ENCODE measurements at regions of chr12 and their contacts with region 1.

Region 1: GRCh38 chr12:108583991-108584390 is 13.9 kb downstream of the TMEM119 start:
- DNase-seq: no peak
- H3K4me3 ChIP-seq: no peak overlapping the region
- H3K27ac ChIP-seq: no peak overlapping the region
- H3K4me1 ChIP-seq: peaks cover 0 to 6% (median 2%) of the 10 kb centered on the region in 4 experiments; a peak in 5 of 7 replicates
- H3K27me3 ChIP-seq: no peaks in the 10 kb centered on the region
- CTCF ChIP-seq: no peak
- EP300 ChIP-seq: no peak
- POLR2A ChIP-seq: no peak
- RAD21 ChIP-seq: no peak

Region 2: GRCh38 chr12:108570743-108571608 is 13.0 kb before region 1 on chr12:
- CTCF ChIA-PET with region 1: interaction called, 18 read pairs
- POLR2A ChIA-PET with region 1: no interaction called
- DNase-seq: peak in 1 of 2 experiments; percentile 41
- H3K4me3 ChIP-seq: no peak overlapping the region
- H3K27ac ChIP-seq: no peak overlapping the region
- H3K4me1 ChIP-seq: no peaks in the 10 kb centered on the region
- H3K27me3 ChIP-seq: no peaks in the 10 kb centered on the region
- CTCF ChIP-seq: peak in 2 of 3 experiments; percentile 37 to 62; a peak in 3 of 4 replicates
- EP300 ChIP-seq: no peak
- POLR2A ChIP-seq: no peak
- RAD21 ChIP-seq: peak; percentile 78 to 85